ENCODE measurements at regions of chr1 and their contacts with region 1.

Region 1: DNA sequence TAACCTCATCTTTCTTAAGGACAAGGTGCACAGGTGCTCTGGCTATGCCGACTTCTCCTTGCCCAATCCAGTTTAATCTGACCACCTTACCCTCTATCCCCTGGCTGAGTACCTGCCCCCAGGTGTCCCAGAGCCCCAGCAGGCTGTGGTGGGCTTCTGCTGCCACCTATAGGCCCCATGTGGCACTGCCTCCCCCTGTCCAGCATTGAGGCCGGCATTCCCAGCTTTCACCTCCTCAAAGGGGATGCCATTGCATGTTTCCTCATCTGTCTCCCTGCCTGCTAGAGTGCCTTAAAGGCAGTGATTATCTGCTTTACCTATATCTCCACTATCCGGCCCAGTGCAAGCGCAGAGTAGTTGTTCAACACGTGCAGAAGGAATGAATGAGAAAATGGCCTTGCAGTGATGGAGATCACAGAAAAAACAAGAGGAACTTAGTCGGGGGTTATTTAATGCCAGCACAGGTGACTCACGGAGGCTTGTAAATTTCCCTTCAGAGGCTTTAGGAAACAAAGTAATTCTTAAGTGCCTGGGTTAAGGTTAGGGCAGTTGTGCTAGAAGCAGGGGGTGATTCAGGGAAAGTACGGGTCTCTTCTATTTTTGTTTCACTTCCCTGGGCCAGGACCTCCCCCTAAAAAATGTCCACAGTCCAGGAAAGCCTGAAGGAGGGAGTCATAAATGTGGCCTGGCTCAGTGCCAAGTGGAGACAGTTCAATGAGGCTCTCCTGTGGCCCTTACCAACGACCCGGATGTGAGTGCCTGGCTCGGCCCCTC is 131.8 kb upstream of the NGF start:
- DNase-seq: peak in 4 of 9 experiments; percentile 15 to 46 (median 22)
- ATAC-seq: no peak
- H3K4me3 ChIP-seq: no peak overlapping the region
- H3K4me3 Mint-ChIP-seq: no peak overlapping the region
- H3K27ac ChIP-seq: no peak overlapping the region
- H3K27ac Mint-ChIP-seq: no peak overlapping the region
- H3K4me1 ChIP-seq: no peaks in the 10 kb centered on the region
- H3K4me1 Mint-ChIP-seq: peaks cover 3% of the 10 kb centered on the region
- H3K27me3 ChIP-seq: no peaks in the 10 kb centered on the region
- H3K27me3 Mint-ChIP-seq: peaks cover 2% of the 10 kb centered on the region
- CTCF ChIP-seq: peak; percentile 56

Region 2: GRCh38 chr1:114979278-114979891 is 490.5 kb before region 1 on chr1:
- CTCF ChIA-PET with region 1: no interaction called
- POLR2A ChIA-PET with region 1: no interaction called
- intact Hi-C with region 1: loop called in 1 of 2 experiments (anchors 10 kb)
- DNase-seq: peak; percentile 42 to 79 (median 76)
- ATAC-seq: no peak
- H3K4me3 ChIP-seq: no peak overlapping the region
- H3K4me3 Mint-ChIP-seq: no peak overlapping the region
- H3K27ac ChIP-seq: no peak overlapping the region
- H3K27ac Mint-ChIP-seq: no peak overlapping the region
- H3K4me1 ChIP-seq: no peaks in the 10 kb centered on the region
- H3K4me1 Mint-ChIP-seq: no peaks in the 10 kb centered on the region
- H3K27me3 ChIP-seq: peaks cover 0 to 2% of the 10 kb centered on the region in 2 experiments
- H3K27me3 Mint-ChIP-seq: peaks cover 20% of the 10 kb centered on the region
- CTCF ChIP-seq: peak; percentile 97

Region 3: DNA sequence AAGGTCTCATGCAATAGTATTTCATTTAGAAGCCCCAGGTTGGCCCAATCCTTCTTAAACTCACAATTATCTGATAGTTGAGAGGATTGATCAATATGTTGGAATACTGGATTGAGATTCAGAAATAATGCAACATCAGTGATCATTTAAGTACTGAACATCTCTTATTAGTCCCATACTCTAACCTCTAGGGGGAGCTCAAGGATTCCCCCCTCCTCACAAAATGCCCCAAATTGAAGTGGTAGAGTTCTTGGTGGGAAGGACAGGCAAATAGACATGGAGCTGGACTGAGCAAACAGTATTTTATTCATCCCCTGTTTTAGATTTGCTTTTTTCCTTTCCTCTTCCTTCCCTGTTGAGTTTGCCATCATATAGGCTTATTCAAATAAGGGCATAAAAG is 194.7 kb before region 1 on chr1:
- CTCF ChIA-PET with region 1: no interaction called
- POLR2A ChIA-PET with region 1: no interaction called
- intact Hi-C with region 1: no loop called
- DNase-seq: no peak
- ATAC-seq: no peak
- H3K4me3 ChIP-seq: no peak overlapping the region
- H3K4me3 Mint-ChIP-seq: no peak overlapping the region
- H3K27ac ChIP-seq: no peak overlapping the region
- H3K27ac Mint-ChIP-seq: no peak overlapping the region
- H3K4me1 ChIP-seq: no peaks in the 10 kb centered on the region
- H3K4me1 Mint-ChIP-seq: no peaks in the 10 kb centered on the region
- H3K27me3 ChIP-seq: no peaks in the 10 kb centered on the region
- H3K27me3 Mint-ChIP-seq: peaks cover 6% of the 10 kb centered on the region
- CTCF ChIP-seq: no peak

Region 4: GRCh38 chr1:115496904-115497527 is 27.1 kb after region 1 on chr1:
- CTCF ChIA-PET with region 1: no interaction called
- POLR2A ChIA-PET with region 1: no interaction called
- intact Hi-C with region 1: loop called in 1 of 2 experiments (anchors 1 kb)
- DNase-seq: no peak
- ATAC-seq: no peak
- H3K4me3 ChIP-seq: no peak overlapping the region
- H3K4me3 Mint-ChIP-seq: no peak overlapping the region
- H3K27ac ChIP-seq: no peak overlapping the region
- H3K27ac Mint-ChIP-seq: no peak overlapping the region
- H3K4me1 ChIP-seq: no peaks in the 10 kb centered on the region
- H3K4me1 Mint-ChIP-seq: no peaks in the 10 kb centered on the region
- H3K27me3 ChIP-seq: no peaks in the 10 kb centered on the region
- H3K27me3 Mint-ChIP-seq: no peaks in the 10 kb centered on the region
- CTCF ChIP-seq: no peak

Region 5: GRCh38 chr1:115506926-115507589 is 37.2 kb after region 1 on chr1:
- CTCF ChIA-PET with region 1: no interaction called
- POLR2A ChIA-PET with region 1: no interaction called
- intact Hi-C with region 1: no loop called
- DNase-seq: no peak
- ATAC-seq: no peak
- H3K4me3 ChIP-seq: no peak overlapping the region
- H3K4me3 Mint-ChIP-seq: no peak overlapping the region
- H3K27ac ChIP-seq: no peak overlapping the region
- H3K27ac Mint-ChIP-seq: no peak overlapping the region
- H3K4me1 ChIP-seq: no peaks in the 10 kb centered on the region
- H3K4me1 Mint-ChIP-seq: no peaks in the 10 kb centered on the region
- H3K27me3 ChIP-seq: no peaks in the 10 kb centered on the region
- H3K27me3 Mint-ChIP-seq: peaks cover 7% of the 10 kb centered on the region
- CTCF ChIP-seq: no peak